Activated CD4-positive, alpha-beta T cell treated with anti-CD3 and anti-CD28 coated beads for 36 hours (primary cell): ENCODE measurements at regions of chr14 and their contacts with region 1.

Region 1: DNA sequence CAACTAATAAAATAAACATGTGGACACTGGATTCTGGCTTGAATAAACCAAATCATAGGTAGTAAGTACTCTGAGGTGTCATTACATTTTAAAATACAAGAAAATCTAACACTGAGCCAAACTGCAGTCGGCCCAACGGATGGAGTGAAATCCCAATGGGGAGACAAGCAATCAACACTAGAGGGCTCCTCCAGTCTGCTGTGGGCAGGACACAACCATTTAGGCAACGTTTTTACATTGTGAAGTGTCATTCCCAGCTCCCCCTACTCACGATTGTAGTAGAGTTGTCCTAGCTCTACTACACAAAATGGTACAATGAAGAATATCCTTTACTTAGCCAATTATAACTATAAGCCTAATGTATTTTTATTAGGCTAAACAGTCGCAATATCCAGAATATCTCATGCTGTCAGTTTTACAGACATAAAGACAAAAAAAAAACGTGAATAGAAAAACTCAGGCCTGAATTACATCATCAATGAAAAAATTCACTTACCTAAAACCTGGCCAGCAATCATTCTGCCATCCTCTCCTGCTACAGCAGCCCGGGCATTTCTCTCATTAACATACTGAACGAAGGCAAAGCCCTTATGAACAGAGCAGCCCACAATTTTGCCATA is 35.7 kb downstream of the HNRNPC start:
- DNase-seq: peak; percentile 32
- ATAC-seq: peak; percentile 28
- H3K4me3 Mint-ChIP-seq: peak overlapping the region; percentile 32
- H3K27ac Mint-ChIP-seq: peak overlapping the region; percentile 91
- H3K4me1 Mint-ChIP-seq: peaks cover 87% of the 10 kb centered on the region
- H3K27me3 Mint-ChIP-seq: no peaks in the 10 kb centered on the region

Region 2: GRCh38 chr14:21215130-21215878 is 18.3 kb before region 1 on chr14:
- CTCF ChIA-PET with region 1: interaction called, 6 read pairs
- POLR2A ChIA-PET with region 1: interaction called, 8 read pairs
- intact Hi-C with region 1: loop called in 1 of 2 experiments (anchors 2 kb)
- DNase-seq: no peak
- ATAC-seq: peak; percentile 56
- H3K4me3 Mint-ChIP-seq: peak overlapping the region; percentile 23
- H3K27ac Mint-ChIP-seq: peak overlapping the region; percentile 73
- H3K4me1 Mint-ChIP-seq: peaks cover 74% of the 10 kb centered on the region
- H3K27me3 Mint-ChIP-seq: no peaks in the 10 kb centered on the region

Region 3: GRCh38 chr14:21352587-21352986 is 119.0 kb after region 1 on chr14:
- CTCF ChIA-PET with region 1: interaction called, 3 read pairs
- POLR2A ChIA-PET with region 1: interaction called, 4 read pairs
- intact Hi-C with region 1: loop called in 1 of 2 experiments (anchors 5 kb)
- DNase-seq: no peak
- ATAC-seq: no peak
- H3K4me3 Mint-ChIP-seq: no peak overlapping the region
- H3K27ac Mint-ChIP-seq: peak overlapping the region; percentile 38
- H3K4me1 Mint-ChIP-seq: no peaks in the 10 kb centered on the region
- H3K27me3 Mint-ChIP-seq: no peaks in the 10 kb centered on the region

Region 4: GRCh38 chr14:21408147-21408546 is 174.6 kb after region 1 on chr14:
- CTCF ChIA-PET with region 1: no interaction called
- POLR2A ChIA-PET with region 1: no interaction called
- intact Hi-C with region 1: no loop called
- DNase-seq: no peak
- ATAC-seq: no peak
- H3K4me3 Mint-ChIP-seq: no peak overlapping the region
- H3K27ac Mint-ChIP-seq: peak overlapping the region; percentile 40
- H3K4me1 Mint-ChIP-seq: peaks cover 10% of the 10 kb centered on the region
- H3K27me3 Mint-ChIP-seq: no peaks in the 10 kb centered on the region

Region 5: GRCh38 chr14:21612324-21612723 is 378.8 kb after region 1 on chr14:
- CTCF ChIA-PET with region 1: no interaction called
- POLR2A ChIA-PET with region 1: no interaction called
- intact Hi-C with region 1: no loop called
- DNase-seq: no peak
- ATAC-seq: no peak
- H3K4me3 Mint-ChIP-seq: no peak overlapping the region
- H3K27ac Mint-ChIP-seq: no peak overlapping the region
- H3K4me1 Mint-ChIP-seq: no peaks in the 10 kb centered on the region
- H3K27me3 Mint-ChIP-seq: peaks cover 16% of the 10 kb centered on the region